CD4-positive, alpha-beta memory T cell (primary cell): ENCODE measurements at regions of chr3 and their contacts with region 1.

Region 1: GRCh38 chr3:45841757-45842491 is at the start of gene LZTFL1:
- DNase-seq: peak; percentile 88 to 93 (median 91)
- H3K4me3 ChIP-seq: peak within 1 kb of the TSS; percentile 58 to 98
- H3K4me3 Mint-ChIP-seq: peak within 1 kb of the TSS; percentile 94 to 99 (median 95)
- H3K27ac ChIP-seq: peak within 1 kb of the TSS; percentile 70
- H3K27ac Mint-ChIP-seq: peak within 1 kb of the TSS; percentile 95 to 98 (median 97)
- H3K4me1 ChIP-seq: peaks cover 19% of the 10 kb centered on the region
- H3K4me1 Mint-ChIP-seq: peaks cover 11 to 30% (median 17%) of the 10 kb centered on the region in 4 donors
- H3K27me3 ChIP-seq: no peaks in the 10 kb centered on the region
- H3K27me3 Mint-ChIP-seq: no peaks in the 10 kb centered on the region
- total RNA-seq, gene LZTFL1: 7.1 to 10.0 TPM

Region 2: GRCh38 chr3:45783667-45784066 is 58.3 kb before region 1 on chr3:
- CTCF ChIA-PET with region 1: no interaction called
- POLR2A ChIA-PET with region 1: no interaction called
- intact Hi-C with region 1: no loop called
- DNase-seq: no peak
- H3K4me3 ChIP-seq: no peak overlapping the region
- H3K4me3 Mint-ChIP-seq: no peak overlapping the region
- H3K27ac ChIP-seq: no peak overlapping the region
- H3K27ac Mint-ChIP-seq: no peak overlapping the region
- H3K4me1 ChIP-seq: no peaks in the 10 kb centered on the region
- H3K4me1 Mint-ChIP-seq: no peaks in the 10 kb centered on the region
- H3K27me3 ChIP-seq: no peaks in the 10 kb centered on the region
- H3K27me3 Mint-ChIP-seq: peaks cover 0 to 1% of the 10 kb centered on the region in 2 donors

Region 3: GRCh38 chr3:45864760-45865519 is 23.0 kb after region 1 on chr3:
- CTCF ChIA-PET with region 1: interaction called, 5 read pairs
- POLR2A ChIA-PET with region 1: interaction called, 15 read pairs
- intact Hi-C with region 1: loop called (anchors 1 kb)
- DNase-seq: peak in 4 of 5 donors; percentile 32 to 50 (median 40)
- H3K4me3 ChIP-seq: no peak overlapping the region
- H3K4me3 Mint-ChIP-seq: peak overlapping the region in 6 of 8 donors; percentile 11 to 55 (median 39)
- H3K27ac ChIP-seq: no peak overlapping the region
- H3K27ac Mint-ChIP-seq: peak overlapping the region in 4 of 7 donors; percentile 5 to 54 (median 28)
- H3K4me1 ChIP-seq: peaks cover 30% of the 10 kb centered on the region
- H3K4me1 Mint-ChIP-seq: peaks cover 30 to 34% (median 32%) of the 10 kb centered on the region in 4 donors
- H3K27me3 ChIP-seq: no peaks in the 10 kb centered on the region
- H3K27me3 Mint-ChIP-seq: peaks cover 14 to 28% of the 10 kb centered on the region in 2 donors

Region 4: DNA sequence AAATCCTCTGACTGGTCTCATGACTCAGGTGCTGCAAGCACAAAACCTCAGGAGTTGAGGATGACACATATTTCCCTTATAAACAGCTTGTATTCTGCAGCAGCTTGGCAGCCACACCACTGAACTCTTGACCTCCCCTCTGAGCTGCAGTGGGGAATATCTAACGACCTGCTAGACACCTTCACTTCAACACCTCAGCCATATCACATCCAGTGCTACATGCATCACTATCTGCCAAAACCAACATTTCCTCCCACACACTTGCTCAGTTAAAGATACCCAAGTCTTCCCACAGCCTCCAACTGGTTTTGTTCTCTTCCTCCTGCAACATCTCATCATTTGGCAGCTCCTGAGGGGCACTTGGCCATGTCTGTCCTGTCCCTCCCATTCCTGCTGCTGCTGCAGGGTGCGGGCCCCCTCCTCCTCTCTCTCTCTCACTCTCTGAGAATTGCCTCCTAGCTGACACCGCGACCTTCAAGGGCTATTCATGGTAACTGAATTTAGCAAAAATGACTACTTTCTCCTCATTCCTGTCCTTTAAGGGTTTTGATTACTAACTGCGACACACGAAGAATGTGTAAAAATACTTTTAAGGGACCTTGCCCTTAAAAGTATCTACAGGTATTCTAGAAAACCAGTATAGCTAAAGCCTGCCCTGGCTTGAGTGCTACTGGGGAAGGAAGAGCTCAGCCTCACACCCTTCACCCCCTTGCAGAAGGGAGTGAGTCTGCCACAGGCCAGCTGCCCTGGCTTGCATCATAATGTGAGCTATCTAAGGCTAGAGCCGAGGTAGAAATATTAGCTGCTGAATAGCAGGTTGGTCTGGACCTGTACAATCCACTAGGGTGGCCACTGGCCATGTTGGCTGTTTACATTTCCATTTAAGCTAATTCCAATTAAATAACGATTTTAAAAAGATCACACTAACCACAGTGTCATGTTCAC is 39.4 kb after region 1 on chr3:
- CTCF ChIA-PET with region 1: interaction called, 4 read pairs
- POLR2A ChIA-PET with region 1: interaction called, 22 read pairs
- intact Hi-C with region 1: loop called (anchors 5 kb)
- DNase-seq: peak; percentile 32 to 80 (median 40)
- H3K4me3 ChIP-seq: no peak overlapping the region
- H3K4me3 Mint-ChIP-seq: peak overlapping the region in 7 of 8 donors; percentile 11 to 78 (median 47)
- H3K27ac ChIP-seq: no peak overlapping the region
- H3K27ac Mint-ChIP-seq: peak overlapping the region in 5 of 7 donors; percentile 2 to 88 (median 31)
- H3K4me1 ChIP-seq: peaks cover 25% of the 10 kb centered on the region
- H3K4me1 Mint-ChIP-seq: peaks cover 19 to 43% (median 23%) of the 10 kb centered on the region in 4 donors
- H3K27me3 ChIP-seq: no peaks in the 10 kb centered on the region
- H3K27me3 Mint-ChIP-seq: peaks cover 2 to 5% of the 10 kb centered on the region in 2 donors

Region 5: DNA sequence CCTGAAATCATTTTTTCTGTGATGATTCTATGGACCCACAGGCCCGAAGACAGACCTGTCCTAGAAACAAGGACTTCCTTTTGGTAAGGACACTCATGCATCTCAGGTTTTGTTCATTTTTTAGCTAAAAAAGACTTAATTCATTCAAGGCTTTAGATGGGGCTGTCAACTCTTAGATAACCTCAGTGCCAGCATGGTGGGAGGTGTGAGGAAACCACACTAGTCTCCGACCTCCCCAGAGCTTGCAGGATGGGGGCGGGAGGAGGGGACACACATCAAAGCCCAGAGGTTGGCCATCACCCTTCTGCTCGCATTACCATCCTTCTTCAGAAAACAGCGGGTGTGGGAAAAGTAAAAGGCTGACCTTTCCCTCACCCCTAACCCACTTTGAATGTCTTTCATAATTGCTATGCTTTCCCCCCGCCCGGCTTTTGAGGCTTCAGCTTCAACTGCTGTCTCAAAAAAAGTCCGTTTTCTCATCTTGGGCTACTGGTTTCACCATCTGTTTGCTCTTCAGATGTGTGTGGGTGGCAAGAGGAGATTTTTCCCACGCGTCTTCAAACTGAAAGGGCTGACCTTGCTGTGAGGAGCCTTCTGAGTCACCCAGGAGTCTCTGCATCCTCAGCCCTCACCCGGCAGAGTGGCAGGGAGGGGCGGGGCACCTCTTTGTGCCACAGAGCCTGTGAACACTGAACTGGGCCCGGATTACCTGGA is 73.8 kb after region 1 on chr3:
- CTCF ChIA-PET with region 1: interaction called, 3 read pairs
- POLR2A ChIA-PET with region 1: interaction called, 4 read pairs
- intact Hi-C with region 1: loop called (anchors 5 kb)
- DNase-seq: peak; percentile 52 to 88 (median 70)
- H3K4me3 ChIP-seq: peak overlapping the region in 1 of 2 donors; percentile 9
- H3K4me3 Mint-ChIP-seq: peak overlapping the region; percentile 81 to 94 (median 86)
- H3K27ac ChIP-seq: peak overlapping the region; percentile 38
- H3K27ac Mint-ChIP-seq: peak overlapping the region; percentile 77 to 94 (median 88)
- H3K4me1 ChIP-seq: peaks cover 44% of the 10 kb centered on the region
- H3K4me1 Mint-ChIP-seq: peaks cover 21 to 66% (median 38%) of the 10 kb centered on the region in 4 donors
- H3K27me3 ChIP-seq: no peaks in the 10 kb centered on the region
- H3K27me3 Mint-ChIP-seq: no peaks in the 10 kb centered on the region